A549 (cell line): ENCODE measurements at regions of chr1 and their contacts with region 1.

Region 1: DNA sequence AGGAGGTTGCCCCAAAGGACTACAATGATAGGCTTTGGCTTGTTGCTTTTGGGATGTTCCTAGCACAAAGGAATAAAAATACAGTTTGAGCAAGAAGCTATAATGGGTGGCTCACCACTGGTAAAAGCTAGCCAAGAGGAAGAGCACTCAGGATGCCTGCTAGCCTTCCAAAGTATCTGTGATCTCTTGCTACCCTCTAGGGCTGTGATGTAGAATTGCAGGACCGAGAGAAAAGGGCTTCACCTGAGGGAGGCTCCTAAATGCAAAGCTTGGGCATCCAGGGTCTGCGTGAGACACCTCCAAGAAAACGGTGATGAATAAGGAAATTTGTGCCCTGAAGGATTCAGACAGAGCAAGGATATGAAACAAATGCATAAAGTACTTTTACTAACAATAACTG is 17.7 kb downstream of the IVL start:
- DNase-seq: peak in 1 of 2 experiments; percentile 48
- ATAC-seq: peak; percentile 90 to 94
- H3K4me3 ChIP-seq: no peak overlapping the region
- H3K27ac ChIP-seq: no peak overlapping the region
- H3K4me1 ChIP-seq: peaks cover 6% of the 10 kb centered on the region; the same call in 1 of the 3 replicates
- CTCF ChIP-seq: peak; percentile 51
- EP300 ChIP-seq: no peak
- POLR2A ChIP-seq: no peak
- RAD21 ChIP-seq: peak; percentile 62 to 74

Region 2: GRCh38 chr1:152654110-152654509 is 272.0 kb before region 1 on chr1:
- CTCF ChIA-PET with region 1: interaction called, 14 read pairs
- POLR2A ChIA-PET with region 1: no interaction called
- DNase-seq: peak; percentile 47 to 62
- ATAC-seq: peak; percentile 88 to 95
- H3K4me3 ChIP-seq: no peak overlapping the region
- H3K27ac ChIP-seq: no peak overlapping the region
- H3K4me1 ChIP-seq: no peaks in the 10 kb centered on the region
- CTCF ChIP-seq: peak; percentile 68
- EP300 ChIP-seq: no peak
- POLR2A ChIP-seq: no peak
- RAD21 ChIP-seq: peak; percentile 61 to 69

Region 3: DNA sequence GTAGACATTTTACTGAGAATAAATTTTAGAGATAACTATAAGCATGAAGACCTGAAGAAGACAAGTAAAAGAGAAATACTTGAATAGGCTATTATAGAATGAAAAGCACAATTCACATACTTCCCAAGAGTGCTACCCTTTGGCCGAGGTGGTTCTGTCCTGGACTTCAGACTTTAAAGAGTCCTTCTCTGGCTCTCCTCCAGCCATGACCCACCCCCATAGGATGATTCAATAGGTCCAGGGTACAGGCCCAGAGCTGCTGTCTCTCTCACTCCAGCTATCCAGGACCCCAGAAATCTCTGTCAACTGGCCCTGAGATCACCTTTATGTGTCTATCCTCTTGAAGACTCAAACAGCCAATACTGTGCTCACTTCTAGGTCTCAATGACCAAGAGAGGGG is 49.3 kb before region 1 on chr1:
- CTCF ChIA-PET with region 1: interaction called, 40 read pairs
- POLR2A ChIA-PET with region 1: no interaction called
- DNase-seq: no peak
- ATAC-seq: no peak
- H3K4me3 ChIP-seq: no peak overlapping the region
- H3K27ac ChIP-seq: no peak overlapping the region
- H3K4me1 ChIP-seq: no peaks in the 10 kb centered on the region
- CTCF ChIP-seq: no peak
- EP300 ChIP-seq: no peak
- POLR2A ChIP-seq: no peak
- RAD21 ChIP-seq: no peak